Kidney (tissue), 22 donors: ENCODE measurements at regions of chr13 and their contacts with region 1.

Region 1: GRCh38 chr13:21476893-21477472 is 17.9 kb upstream of the ZDHHC20 start:
- DNase-seq: peak; percentile 85 to 94 (median 90)
- H3K4me3 ChIP-seq: peak overlapping the region; percentile 43 to 72 (median 48)
- H3K27ac ChIP-seq: no peak overlapping the region
- H3K4me1 ChIP-seq: no peaks in the 10 kb centered on the region
- H3K27me3 ChIP-seq: no peaks in the 10 kb centered on the region
- CTCF ChIP-seq: peak; percentile 96

Region 2: GRCh38 chr13:20482275-20482761 is 994.7 kb before region 1 on chr13:
- intact Hi-C with region 1: no loop called
- DNase-seq: peak in 2 of 5 donors; percentile 58 to 59
- H3K4me3 ChIP-seq: no peak overlapping the region
- H3K27ac ChIP-seq: peak overlapping the region in 1 of 2 donors; percentile 5
- H3K4me1 ChIP-seq: peaks cover 0 to 7% (median 0%) of the 10 kb centered on the region in 3 donors
- H3K27me3 ChIP-seq: no peaks in the 10 kb centered on the region
- CTCF ChIP-seq: no peak

Region 3: DNA sequence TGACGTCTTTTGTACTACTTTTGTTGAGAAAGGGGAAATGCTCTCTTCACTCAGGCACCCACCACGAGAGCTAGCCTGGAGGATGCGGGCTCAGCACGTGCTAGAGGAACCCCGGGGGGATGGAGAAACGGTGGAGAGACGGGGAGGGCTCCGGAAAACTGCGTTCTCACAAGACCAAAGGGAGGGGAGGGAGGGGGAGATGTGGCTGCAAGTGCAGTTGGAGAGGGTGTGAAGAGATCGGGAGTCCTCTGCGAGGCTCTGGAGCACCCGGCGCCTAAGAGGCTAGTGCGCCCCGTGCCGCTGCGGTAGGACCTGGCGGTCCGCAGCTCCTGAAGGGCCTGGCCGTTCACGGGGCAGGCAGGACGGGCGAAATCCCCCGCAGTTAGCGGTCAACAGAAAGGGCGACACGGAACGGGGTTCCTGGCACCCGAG is 531.0 kb before region 1 on chr13:
- intact Hi-C with region 1: loop called (anchors 10 kb)
- DNase-seq: peak in 3 of 5 donors; percentile 23 to 39 (median 32)
- H3K4me3 ChIP-seq: peak overlapping the region in 1 of 3 donors; percentile 7
- H3K27ac ChIP-seq: no peak overlapping the region
- H3K4me1 ChIP-seq: peaks cover 0 to 2% (median 0%) of the 10 kb centered on the region in 3 donors
- H3K27me3 ChIP-seq: peaks cover 3% of the 10 kb centered on the region
- CTCF ChIP-seq: no peak

Region 4: DNA sequence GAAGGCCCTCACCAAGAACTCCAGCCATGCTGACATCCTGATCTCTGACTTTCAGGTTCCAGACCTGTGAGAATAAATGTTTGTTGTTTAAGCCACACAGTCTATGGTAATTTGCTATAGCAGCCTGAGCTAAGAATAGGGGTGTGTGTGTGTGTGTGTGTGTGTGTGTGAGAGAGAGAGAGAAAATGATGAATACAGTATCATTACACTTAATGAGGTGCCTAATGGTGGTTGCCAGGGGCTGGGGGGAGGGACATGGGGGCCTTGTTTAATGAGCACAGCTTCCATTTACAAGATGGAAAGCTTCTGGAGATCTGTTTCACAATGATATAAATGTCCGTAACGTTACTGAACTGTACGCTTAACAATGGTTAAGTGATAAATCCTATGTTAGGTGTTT is 361.8 kb before region 1 on chr13:
- intact Hi-C with region 1: loop called (anchors 10 kb)
- DNase-seq: no peak
- H3K4me3 ChIP-seq: no peak overlapping the region
- H3K27ac ChIP-seq: no peak overlapping the region
- H3K4me1 ChIP-seq: no peaks in the 10 kb centered on the region
- H3K27me3 ChIP-seq: no peaks in the 10 kb centered on the region
- CTCF ChIP-seq: no peak

Region 5: GRCh38 chr13:21297914-21298831 is 178.8 kb before region 1 on chr13:
- intact Hi-C with region 1: loop called (anchors 10 kb)
- DNase-seq: peak; percentile 91 to 97 (median 94)
- H3K4me3 ChIP-seq: peak overlapping the region; percentile 80 to 88 (median 83)
- H3K27ac ChIP-seq: peak overlapping the region; percentile 38 to 74
- H3K4me1 ChIP-seq: peaks cover 3 to 6% (median 4%) of the 10 kb centered on the region in 3 donors
- H3K27me3 ChIP-seq: no peaks in the 10 kb centered on the region
- CTCF ChIP-seq: peak; percentile 92

Region 6: GRCh38 chr13:22470082-22470481 is 993.1 kb after region 1 on chr13:
- intact Hi-C with region 1: no loop called
- DNase-seq: no peak
- H3K4me3 ChIP-seq: no peak overlapping the region
- H3K27ac ChIP-seq: no peak overlapping the region
- H3K4me1 ChIP-seq: no peaks in the 10 kb centered on the region
- H3K27me3 ChIP-seq: no peaks in the 10 kb centered on the region
- CTCF ChIP-seq: no peak